Activated CD4-positive, alpha-beta T cell treated with anti-CD3 and anti-CD28 coated beads for 36 hours (primary cell): ENCODE measurements at regions of chr1 and their contacts with region 1.

Region 1: DNA sequence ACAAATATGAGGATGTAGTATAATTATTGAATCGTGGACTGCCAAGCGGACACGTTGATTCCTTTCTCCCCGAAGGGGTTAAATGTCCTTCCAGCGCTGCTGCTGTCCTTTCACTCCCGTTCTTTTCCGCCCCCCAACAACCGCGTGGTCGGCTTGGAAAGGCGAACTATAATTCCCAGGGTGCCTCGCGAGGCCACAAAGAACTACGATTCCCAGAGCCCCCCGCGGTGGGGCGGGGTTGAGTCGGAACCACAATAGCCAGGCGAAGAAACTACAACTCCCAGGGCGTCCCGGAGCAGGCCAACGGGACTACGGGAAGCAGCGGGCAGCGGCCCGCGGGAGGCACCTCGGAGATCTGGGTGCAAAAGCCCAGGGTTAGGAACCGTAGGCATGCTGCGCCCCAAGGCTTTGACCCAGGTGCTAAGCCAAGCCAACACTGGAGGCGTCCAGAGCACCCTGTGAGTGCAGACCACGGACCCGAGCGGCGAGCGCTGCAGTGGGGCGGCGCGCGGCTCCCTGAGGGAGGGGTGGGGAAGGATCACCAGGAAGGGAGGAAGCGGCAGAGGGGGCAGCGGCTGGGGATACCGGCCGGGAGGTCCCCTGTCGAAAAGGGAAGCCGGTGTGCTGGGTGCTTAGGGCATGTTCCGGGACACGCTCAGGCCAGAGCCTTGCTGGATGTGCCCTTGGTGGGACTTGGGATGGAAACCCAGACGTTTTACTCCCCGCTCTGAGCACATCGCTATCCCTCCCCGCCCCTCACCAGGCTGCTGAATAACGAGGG is at the start of gene LAMTOR2:
- DNase-seq: peak; percentile 98
- ATAC-seq: peak; percentile 82
- H3K4me3 Mint-ChIP-seq: peak within 1 kb of the TSS; percentile 92
- H3K27ac Mint-ChIP-seq: peak within 1 kb of the TSS; percentile 88
- H3K4me1 Mint-ChIP-seq: peaks cover 18% of the 10 kb centered on the region
- H3K27me3 Mint-ChIP-seq: no peaks in the 10 kb centered on the region
- total RNA-seq, gene LAMTOR2: 26.1 to 50.3 TPM

Region 2: GRCh38 chr1:155261852-155262673 is 792.6 kb before region 1 on chr1 and contains the start of gene SCAMP3:
- CTCF ChIA-PET with region 1: no interaction called
- POLR2A ChIA-PET with region 1: no interaction called
- intact Hi-C with region 1: loop called in 1 of 2 experiments (anchors 5 kb)
- DNase-seq: peak; percentile 93
- ATAC-seq: peak; percentile 95
- H3K4me3 Mint-ChIP-seq: peak within 1 kb of the TSS; percentile 98
- H3K27ac Mint-ChIP-seq: peak within 1 kb of the TSS; percentile 91
- H3K4me1 Mint-ChIP-seq: peaks cover 27% of the 10 kb centered on the region
- H3K27me3 Mint-ChIP-seq: no peaks in the 10 kb centered on the region
- total RNA-seq, gene SCAMP3: 82.0 to 95.5 TPM

Region 3: DNA sequence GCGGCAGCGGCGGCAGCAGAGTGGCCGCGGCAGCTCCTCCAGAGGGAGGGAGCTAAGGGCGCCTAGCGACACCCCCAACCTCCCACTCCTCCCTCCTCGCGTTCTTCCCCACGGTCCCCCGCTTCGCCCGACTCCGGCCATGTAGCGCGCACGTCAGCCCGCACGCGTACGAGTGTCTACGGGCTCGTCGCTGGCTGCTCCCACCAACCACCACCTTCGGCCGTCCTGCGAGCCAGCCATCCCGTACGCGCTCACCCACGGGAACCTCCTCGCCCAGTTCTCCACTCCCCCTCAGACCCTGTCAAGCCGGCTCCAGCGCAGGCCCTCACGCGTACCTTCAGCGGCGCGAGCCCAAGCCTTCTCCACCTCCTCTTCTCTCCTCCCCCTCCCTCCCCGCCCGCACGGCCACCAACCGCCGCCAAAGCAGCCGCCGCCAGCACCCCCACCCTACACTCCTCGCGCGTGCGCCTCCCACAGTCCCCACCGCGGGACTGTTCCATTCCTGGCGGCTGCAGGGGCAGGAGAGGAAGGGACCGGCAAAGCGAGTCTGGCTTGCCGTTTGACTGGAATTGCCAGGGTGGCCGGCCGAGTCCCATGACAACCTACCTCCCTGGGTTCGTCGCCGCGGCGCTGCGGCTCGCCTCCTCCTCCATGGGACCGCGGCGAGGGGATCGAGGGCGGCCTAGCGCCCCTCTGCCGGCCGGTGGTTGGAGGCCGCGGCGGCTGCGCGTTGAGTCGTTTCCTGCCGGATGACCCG is 366.2 kb before region 1 on chr1 and contains the start of gene YY1AP1:
- CTCF ChIA-PET with region 1: no interaction called
- POLR2A ChIA-PET with region 1: no interaction called
- intact Hi-C with region 1: loop called in 1 of 2 experiments (anchors 5 kb)
- DNase-seq: peak; percentile 95
- ATAC-seq: peak; percentile 86
- H3K4me3 Mint-ChIP-seq: peak within 1 kb of the TSS; percentile 97
- H3K27ac Mint-ChIP-seq: peak within 1 kb of the TSS; percentile 94
- H3K4me1 Mint-ChIP-seq: peaks cover 29% of the 10 kb centered on the region
- H3K27me3 Mint-ChIP-seq: no peaks in the 10 kb centered on the region
- total RNA-seq, gene YY1AP1: 59.6 to 76.0 TPM

Region 4: DNA sequence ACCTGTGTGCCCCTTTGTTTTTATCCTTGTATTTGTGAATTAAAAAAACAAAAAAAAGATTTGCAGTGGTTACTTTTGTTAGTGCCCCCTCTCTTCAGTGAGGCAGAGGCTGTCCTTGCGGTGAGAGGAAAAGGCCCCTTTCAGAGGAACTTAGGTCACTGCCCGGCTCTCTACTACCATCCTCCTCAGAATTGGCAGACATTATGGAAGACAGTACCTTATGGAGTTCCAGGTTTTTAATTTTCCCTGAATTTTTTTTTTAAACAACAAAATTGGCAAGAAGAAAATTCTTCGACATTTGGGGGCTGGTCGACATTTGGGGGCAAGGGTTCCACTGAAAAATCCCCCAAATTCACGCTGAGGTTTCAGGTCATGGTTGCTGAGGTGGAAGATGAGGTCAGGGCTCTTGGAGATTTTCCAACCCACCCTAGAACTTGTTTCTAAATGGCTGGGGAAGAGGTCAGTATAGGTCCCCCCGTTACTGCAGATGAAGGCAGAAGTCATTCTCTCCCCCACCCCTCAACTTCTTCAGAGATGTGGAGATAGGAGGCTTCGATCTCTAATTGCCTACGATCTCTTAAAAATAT is 108.0 kb before region 1 on chr1:
- CTCF ChIA-PET with region 1: interaction called, 3 read pairs
- POLR2A ChIA-PET with region 1: no interaction called
- intact Hi-C with region 1: loop called in 1 of 2 experiments (anchors 2 kb)
- DNase-seq: no peak
- ATAC-seq: peak; percentile 13
- H3K4me3 Mint-ChIP-seq: peak overlapping the region; percentile 58
- H3K27ac Mint-ChIP-seq: peak overlapping the region; percentile 96
- H3K4me1 Mint-ChIP-seq: peaks cover 50% of the 10 kb centered on the region
- H3K27me3 Mint-ChIP-seq: no peaks in the 10 kb centered on the region

Region 5: GRCh38 chr1:156020292-156021089 is 34.2 kb before region 1 on chr1 and contains the start of gene SSR2:
- CTCF ChIA-PET with region 1: interaction called, 12 read pairs
- POLR2A ChIA-PET with region 1: no interaction called
- intact Hi-C with region 1: loop called (anchors 1 kb)
- DNase-seq: peak; percentile 92
- ATAC-seq: peak; percentile 100
- H3K4me3 Mint-ChIP-seq: peak within 1 kb of the TSS; percentile 94
- H3K27ac Mint-ChIP-seq: peak within 1 kb of the TSS; percentile 96
- H3K4me1 Mint-ChIP-seq: peaks cover 20% of the 10 kb centered on the region
- H3K27me3 Mint-ChIP-seq: peaks cover 4% of the 10 kb centered on the region
- total RNA-seq, gene SSR2: 143 to 197 TPM

Region 6: DNA sequence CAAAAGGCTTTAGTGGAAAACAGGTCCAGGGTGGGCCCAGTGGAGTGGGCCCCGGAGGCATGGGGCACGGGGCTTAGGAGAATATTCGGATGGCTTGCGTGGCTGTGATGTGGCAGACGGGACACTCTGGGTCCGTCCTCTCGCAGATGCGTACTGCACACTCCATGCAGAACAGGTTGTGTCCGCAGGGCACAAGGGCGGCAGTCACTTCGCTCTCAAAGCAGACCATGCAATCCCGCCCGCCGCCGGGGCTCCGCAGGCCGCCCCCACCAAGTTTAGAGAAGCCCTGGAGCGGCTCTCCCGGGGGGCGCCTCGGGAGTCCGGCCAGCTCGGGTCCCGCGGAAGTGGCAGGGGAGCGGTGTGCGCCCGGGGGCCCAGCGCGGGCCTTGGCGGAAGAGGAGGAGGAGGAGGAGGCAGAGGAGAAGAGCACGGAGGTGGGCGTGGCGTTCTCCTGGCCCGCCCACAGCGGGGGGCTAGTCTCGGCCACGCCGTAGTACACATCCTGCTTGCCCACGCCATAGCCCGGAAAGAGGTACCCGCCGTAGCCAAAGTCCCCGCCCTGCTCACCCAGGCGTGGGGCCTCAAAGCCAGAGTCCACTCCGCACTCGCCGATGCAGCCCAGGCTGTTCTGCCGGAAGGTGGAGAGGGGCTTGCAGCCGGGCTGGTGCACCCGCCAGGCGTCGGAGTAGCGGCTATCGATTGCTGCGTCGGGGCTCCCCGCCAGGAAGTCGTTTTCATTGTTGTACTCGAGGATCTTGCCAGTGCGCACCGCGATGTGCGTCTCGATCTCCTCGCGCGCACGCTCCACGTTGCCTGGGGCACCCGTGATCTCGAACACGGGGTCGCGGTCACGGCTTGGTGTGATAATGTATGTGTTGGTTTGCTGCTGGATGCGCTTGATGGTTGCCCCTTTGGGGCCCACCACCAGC is 22.1 kb after region 1 on chr1:
- CTCF ChIA-PET with region 1: no interaction called
- POLR2A ChIA-PET with region 1: no interaction called
- intact Hi-C with region 1: no loop called
- DNase-seq: no peak
- ATAC-seq: no peak
- H3K4me3 Mint-ChIP-seq: no peak overlapping the region
- H3K27ac Mint-ChIP-seq: no peak overlapping the region
- H3K4me1 Mint-ChIP-seq: no peaks in the 10 kb centered on the region
- H3K27me3 Mint-ChIP-seq: peaks cover 5% of the 10 kb centered on the region

Region 7: GRCh38 chr1:156114101-156114916 is 59.6 kb after region 1 on chr1 and contains the start of gene LMNA:
- CTCF ChIA-PET with region 1: no interaction called
- POLR2A ChIA-PET with region 1: interaction called, 3 read pairs
- intact Hi-C with region 1: loop called in 1 of 2 experiments (anchors 2 kb)
- DNase-seq: peak; percentile 90
- ATAC-seq: peak; percentile 91
- H3K4me3 Mint-ChIP-seq: peak within 1 kb of the TSS; percentile 93
- H3K27ac Mint-ChIP-seq: peak within 1 kb of the TSS; percentile 83
- H3K4me1 Mint-ChIP-seq: peaks cover 26% of the 10 kb centered on the region
- H3K27me3 Mint-ChIP-seq: peaks cover 19% of the 10 kb centered on the region
- total RNA-seq, gene LMNA: 184 to 218 TPM

Region 8: DNA sequence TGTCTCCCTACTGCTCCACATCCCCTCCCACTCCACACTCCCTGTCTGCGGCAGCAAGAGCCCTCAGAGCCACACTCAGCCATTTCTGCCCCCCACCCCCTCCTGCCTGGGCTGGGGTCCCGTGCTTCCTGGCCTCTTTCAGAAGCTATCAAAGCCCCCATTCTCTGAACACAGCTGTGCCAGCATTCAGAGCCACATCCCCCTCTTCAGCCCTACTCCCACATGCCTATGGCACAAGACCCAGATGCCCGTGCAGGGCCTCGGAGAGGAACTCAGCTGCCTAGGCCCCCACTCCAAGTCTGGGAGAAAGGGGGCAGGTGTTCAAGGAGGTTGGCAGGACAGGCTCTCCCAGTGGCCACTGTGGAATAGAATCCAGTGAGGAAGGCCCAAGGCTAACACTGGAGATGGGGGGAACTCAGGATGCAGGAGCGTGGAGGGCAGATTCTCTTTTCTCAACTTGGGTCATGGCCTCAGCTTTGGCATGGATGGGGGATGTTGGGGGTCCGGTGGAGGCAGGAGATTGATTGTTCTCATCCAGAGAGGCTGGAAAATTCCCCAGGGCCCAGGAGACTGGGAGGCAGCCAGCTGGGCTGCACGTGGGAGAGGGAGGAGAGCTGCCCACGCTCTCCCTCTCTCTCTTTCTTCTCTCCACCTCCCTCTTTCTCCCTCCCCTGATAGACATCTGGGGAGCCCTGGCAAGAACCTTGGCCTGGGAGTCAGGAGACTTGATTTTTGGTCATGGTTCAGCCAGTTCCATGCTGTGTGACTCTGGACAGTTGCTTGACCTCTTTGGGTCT is 583.7 kb after region 1 on chr1:
- CTCF ChIA-PET with region 1: no interaction called
- POLR2A ChIA-PET with region 1: no interaction called
- intact Hi-C with region 1: no loop called
- DNase-seq: no peak
- ATAC-seq: no peak
- H3K4me3 Mint-ChIP-seq: no peak overlapping the region
- H3K27ac Mint-ChIP-seq: no peak overlapping the region
- H3K4me1 Mint-ChIP-seq: peaks cover 17% of the 10 kb centered on the region
- H3K27me3 Mint-ChIP-seq: peaks cover 61% of the 10 kb centered on the region

Region 9: DNA sequence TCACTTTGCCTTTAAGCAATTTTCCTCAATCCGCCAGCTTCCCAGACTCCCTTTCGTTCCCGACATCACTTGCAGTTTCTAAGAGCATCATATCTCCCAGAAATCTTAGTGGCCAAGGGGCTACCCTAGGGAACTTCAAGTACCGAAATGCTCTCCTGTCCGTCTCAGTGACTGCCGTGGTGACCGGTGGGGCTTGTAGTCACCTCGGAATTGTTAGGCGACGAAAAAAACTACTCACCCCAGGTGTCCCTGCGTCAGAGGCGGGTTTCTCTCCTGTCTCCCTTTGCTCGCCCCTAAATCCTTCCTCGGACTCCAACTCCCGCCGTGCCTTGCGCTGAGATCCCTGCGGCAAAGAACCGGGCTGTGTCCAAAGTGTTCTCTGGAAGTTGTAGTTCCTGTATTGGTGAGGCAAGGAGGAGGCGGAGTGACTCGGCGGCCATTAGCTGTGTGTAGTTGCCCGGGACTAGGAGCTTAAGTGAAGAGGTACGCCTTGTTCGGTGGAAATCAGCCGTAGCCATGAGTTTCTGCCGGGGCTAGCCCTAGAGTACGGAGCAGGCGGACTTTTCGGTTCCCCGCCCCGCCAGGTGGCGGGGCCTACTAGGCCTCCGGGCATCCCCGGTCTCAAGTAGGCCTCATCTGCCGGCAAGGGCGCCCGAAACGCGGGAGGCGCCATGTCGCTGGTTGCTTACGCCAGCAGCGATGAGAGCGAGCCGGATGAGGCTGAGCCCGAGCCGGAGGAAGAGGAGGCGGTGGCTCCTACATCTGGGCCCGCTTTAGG is 712.6 kb after region 1 on chr1 and contains the start of gene PRCC:
- CTCF ChIA-PET with region 1: no interaction called
- POLR2A ChIA-PET with region 1: no interaction called
- intact Hi-C with region 1: loop called in 1 of 2 experiments (anchors 5 kb)
- DNase-seq: peak; percentile 98
- ATAC-seq: peak; percentile 96
- H3K4me3 Mint-ChIP-seq: no peak within 1 kb of the TSS
- H3K27ac Mint-ChIP-seq: no peak within 1 kb of the TSS
- H3K4me1 Mint-ChIP-seq: peaks cover 35% of the 10 kb centered on the region
- H3K27me3 Mint-ChIP-seq: no peaks in the 10 kb centered on the region
- total RNA-seq, gene PRCC: 80.4 to 110 TPM